Pancreas (tissue), 10 donors: ENCODE measurements at regions of chr12 and their contacts with region 1.

Region 1: DNA sequence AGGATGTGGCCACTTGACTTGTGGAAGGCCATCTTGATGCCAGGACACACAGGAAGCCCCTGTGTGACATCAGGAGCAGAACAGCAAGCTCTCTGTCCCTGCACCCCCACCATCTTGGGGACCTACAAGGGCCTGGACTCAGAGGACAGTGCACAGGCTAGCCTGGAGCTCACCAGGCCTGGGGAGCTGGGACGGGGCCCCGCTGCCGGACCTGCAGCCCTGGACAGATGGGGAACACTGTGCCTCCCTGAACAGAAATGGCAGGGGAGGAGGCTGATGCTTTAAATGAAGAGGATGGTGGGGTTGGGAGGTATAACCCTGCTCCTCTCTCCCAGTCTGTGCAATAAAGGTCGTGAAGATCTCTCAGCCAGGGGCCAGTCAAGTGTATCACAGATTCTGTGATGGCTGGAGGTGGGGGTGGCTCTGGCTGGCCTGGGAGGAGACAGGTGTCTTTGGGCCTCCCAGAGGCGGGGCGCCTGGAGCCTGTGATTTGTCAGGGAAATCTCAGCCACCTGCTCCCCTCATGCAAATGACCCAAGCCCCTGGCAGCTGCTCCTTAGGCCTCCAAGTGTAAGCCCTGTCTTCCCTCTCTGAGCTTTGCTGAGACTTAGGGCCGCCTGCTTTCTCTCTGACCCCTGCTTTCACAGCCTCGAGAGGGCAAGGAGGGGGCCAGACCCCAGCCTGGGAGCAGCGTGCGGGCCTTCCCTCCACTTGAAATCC is 1.1 kb upstream of the GNB3 start:
- DNase-seq: no peak
- ATAC-seq: no peak
- H3K4me3 ChIP-seq: no peak overlapping the region
- H3K27ac ChIP-seq: no peak overlapping the region
- H3K4me1 ChIP-seq: no peaks in the 10 kb centered on the region
- H3K27me3 ChIP-seq: no peaks in the 10 kb centered on the region
- CTCF ChIP-seq: no peak

Region 2: GRCh38 chr12:6730169-6730568 is 109.5 kb before region 1 on chr12:
- intact Hi-C with region 1: loop called in 1 of 3 experiments (anchors 5 kb)
- DNase-seq: no peak
- ATAC-seq: no peak
- H3K4me3 ChIP-seq: no peak overlapping the region
- H3K27ac ChIP-seq: no peak overlapping the region
- H3K4me1 ChIP-seq: no peaks in the 10 kb centered on the region
- H3K27me3 ChIP-seq: no peaks in the 10 kb centered on the region
- CTCF ChIP-seq: no peak